Cardiac septum (tissue), 1 donor: ENCODE measurements at regions of chrX and their contacts with region 1.

Region 1: GRCh38 chrX:103845165-103845653 is 13.2 kb upstream of the RAB9B start:
- DNase-seq: no peak

Region 2: GRCh38 chrX:103629318-103630170 is 215.7 kb before region 1 on chrX:
- intact Hi-C with region 1: no loop called
- DNase-seq: peak; percentile 82

Region 3: GRCh38 chrX:104136241-104137019 is 291.2 kb after region 1 on chrX:
- intact Hi-C with region 1: loop called (anchors 2 kb)
- DNase-seq: no peak